ENCODE measurements at regions of chr12 and their contacts with region 1.

Region 1: GRCh38 chr12:93008044-93008778 is 79.1 kb upstream of the EEA1 start:
- DNase-seq: no peak
- H3K4me3 ChIP-seq: no peak overlapping the region
- H3K27ac ChIP-seq: no peak overlapping the region
- H3K27me3 ChIP-seq: no peaks in the 10 kb centered on the region
- CTCF ChIP-seq: no peak

Region 2: DNA sequence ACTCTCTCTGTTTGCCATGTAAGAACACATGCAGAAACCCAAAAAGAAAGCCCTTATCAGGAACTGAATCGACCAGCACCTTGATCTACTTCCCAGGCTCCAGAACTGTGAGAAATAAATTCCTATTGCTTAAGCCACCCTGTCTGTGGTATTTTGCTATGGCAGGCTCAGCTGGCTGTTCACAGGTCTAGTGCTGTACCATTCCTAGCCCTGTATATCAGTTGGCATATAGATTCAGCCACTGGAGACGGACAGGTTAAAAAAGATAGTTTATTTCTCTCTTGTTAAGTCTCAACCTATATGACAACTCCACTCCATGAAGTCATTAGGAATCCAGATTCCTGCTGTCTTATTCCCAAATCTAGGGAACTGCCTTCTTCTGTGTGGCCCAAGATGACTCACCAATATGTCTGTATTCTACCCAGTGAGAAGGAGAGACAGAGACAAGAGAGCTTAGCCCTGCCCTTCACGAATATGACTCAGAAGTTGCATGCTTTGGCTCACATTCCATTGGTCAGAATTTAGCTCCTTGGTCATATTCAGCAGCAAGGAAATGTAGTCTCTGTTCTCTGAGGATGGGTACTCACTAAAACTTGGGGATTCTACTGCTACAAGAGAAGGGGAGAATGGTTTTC is 248.5 kb before region 1 on chr12:
- CTCF ChIA-PET with region 1: no interaction called
- POLR2A ChIA-PET with region 1: no interaction called
- DNase-seq: peak; percentile 76
- H3K4me3 ChIP-seq: no peak overlapping the region
- H3K27ac ChIP-seq: peak overlapping the region; percentile 22
- H3K27me3 ChIP-seq: no peaks in the 10 kb centered on the region
- CTCF ChIP-seq: no peak

Region 3: DNA sequence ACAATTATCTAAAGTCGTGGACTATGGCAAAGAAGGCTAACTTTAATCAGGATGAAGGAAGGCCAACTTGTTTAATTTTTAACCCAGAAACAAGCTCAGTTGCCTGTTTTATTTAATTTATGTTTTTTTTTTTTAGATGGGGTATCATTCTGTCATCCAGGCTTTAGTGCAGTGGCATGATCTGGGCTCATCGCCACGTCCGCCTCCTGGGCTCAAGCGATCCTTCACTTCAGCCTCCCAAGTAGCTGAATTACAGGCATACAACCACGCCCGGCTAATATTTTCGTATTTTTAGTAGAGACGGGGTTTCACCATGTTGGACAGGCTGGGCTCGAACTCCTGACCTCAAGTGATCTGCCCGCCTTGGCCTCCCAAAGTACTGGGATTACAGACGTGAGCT is 389.2 kb after region 1 on chr12:
- CTCF ChIA-PET with region 1: interaction called, 16 read pairs
- POLR2A ChIA-PET with region 1: no interaction called
- DNase-seq: no peak
- H3K4me3 ChIP-seq: no peak overlapping the region
- H3K27ac ChIP-seq: no peak overlapping the region
- H3K27me3 ChIP-seq: no peaks in the 10 kb centered on the region
- CTCF ChIP-seq: no peak